Activated CD8-positive, alpha-beta memory T cell treated with anti-CD3 and anti-CD28 coated beads, Interleukin-2, amount 10 ng/mL, durations not matched to agents 7 days and 5 days (primary cell): ENCODE measurements at regions of chr3 and their contacts with region 1.

Region 1: DNA sequence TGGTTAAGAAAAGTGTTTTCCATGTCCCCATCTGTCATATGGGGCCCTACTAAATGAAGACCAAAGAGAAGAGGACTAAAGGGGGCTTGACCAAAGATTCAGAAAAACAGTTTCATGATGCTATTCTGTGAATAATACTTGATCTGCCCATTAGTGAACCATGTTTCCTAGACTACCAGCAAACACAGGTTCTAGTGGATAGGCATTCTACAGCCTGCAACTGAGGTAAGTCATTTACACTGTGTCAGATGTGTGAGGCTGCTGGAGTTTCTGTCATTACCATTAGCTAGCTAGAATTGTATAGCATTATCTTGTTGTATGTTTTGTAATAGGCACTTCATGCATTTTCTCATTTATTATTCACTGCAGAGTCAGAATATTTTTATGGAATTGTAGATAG is 6.6 kb downstream of the GPR171 start:
- DNase-seq: no peak
- ATAC-seq: no peak
- H3K4me3 Mint-ChIP-seq: no peak overlapping the region
- H3K27ac Mint-ChIP-seq: peak overlapping the region; percentile 57
- H3K4me1 Mint-ChIP-seq: peaks cover 56% of the 10 kb centered on the region
- H3K27me3 Mint-ChIP-seq: no peaks in the 10 kb centered on the region

Region 2: DNA sequence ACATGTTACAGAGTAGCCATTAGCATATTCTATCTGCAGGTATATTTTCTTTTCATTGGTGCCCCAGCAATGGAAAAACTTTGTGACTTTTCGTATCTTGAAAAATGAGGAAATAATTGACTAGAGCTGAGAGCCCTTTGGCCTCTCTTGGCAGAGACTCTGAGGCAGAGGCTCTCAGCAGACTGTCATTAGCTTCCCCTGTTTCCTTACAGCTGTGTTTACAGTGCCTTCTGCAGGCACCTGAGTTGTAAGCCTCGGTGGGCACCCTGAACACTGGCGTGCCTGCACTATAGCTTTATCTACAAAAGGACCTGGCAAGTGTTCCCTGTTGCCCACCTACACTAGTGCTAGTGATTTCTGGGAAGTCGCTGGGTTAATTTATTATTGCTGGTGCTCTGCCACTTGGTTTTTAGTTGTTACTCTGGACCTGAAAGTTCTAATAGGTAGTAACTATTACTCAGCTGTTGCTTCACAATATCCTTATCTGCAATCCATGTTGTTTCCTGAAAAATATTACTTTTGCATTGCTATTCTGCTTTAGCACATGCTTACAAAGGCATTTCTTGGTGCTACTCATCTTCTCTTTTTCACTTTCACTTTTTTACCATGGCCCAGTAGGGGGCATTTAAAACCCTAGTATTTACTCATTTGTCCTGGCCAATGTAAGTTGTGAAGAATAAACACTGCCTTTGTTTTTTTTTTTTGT is 14.4 kb after region 1 on chr3:
- CTCF ChIA-PET with region 1: interaction called, 19 read pairs
- DNase-seq: peak; percentile 57
- ATAC-seq: peak; percentile 46
- H3K4me3 Mint-ChIP-seq: peak overlapping the region; percentile 52
- H3K27ac Mint-ChIP-seq: peak overlapping the region; percentile 90
- H3K4me1 Mint-ChIP-seq: peaks cover 61% of the 10 kb centered on the region
- H3K27me3 Mint-ChIP-seq: no peaks in the 10 kb centered on the region